GM12878 (cell line): ENCODE measurements at regions of chr11 and their contacts with region 1.

Region 1: GRCh38 chr11:75280227-75280701 is 39.7 kb downstream of the TPBGL start:
- DNase-seq: peak; percentile 16
- ATAC-seq: peak; percentile 98
- H3K4me3 ChIP-seq: no peak overlapping the region
- H3K27ac ChIP-seq: no peak overlapping the region
- H3K4me1 ChIP-seq: no peaks in the 10 kb centered on the region
- H3K27me3 ChIP-seq: no peaks in the 10 kb centered on the region; a peak in 1 of 4 replicates
- CTCF ChIP-seq: peak; percentile 93 to 96 (median 93)
- EP300 ChIP-seq: no peak
- POLR2A ChIP-seq: no peak
- RAD21 ChIP-seq: peak; percentile 90

Region 2: DNA sequence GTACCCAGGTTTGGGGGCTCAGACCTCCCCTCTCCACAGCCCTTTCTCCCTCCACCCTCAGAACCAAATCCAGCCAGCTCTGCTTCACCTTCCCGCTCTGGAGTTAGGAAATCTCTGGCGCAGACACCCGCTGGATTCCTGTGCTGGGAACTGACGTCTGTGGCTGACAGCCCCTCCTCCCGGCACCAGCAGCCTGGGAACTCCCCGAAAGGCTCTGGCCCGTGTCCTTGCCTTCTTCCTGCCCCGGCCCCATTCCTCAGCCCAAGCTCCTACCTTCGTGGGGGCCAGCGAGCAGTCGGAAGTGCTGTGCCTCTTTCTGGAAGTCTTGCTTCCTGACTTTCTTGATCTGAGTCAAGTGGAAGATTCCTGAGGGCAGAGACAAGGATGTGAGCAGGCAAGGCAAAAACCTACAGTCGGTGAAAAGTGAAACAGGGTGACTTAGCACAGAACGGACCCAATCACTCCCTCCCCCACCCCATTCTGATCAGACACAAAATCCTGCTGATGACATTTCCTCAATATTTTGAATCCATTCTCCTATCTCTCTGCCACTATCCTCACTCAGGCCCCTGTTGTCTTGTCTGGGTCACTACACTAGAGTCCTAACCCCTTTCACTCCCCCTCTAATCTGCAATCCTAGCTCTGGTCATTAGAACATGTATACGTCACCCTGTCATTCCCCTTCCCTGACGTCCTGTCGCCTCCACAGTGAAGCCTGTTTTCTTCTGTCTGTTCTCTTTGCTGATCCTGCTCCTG is 583.2 kb before region 1 on chr11:
- CTCF ChIA-PET with region 1: no interaction called
- POLR2A ChIA-PET with region 1: no interaction called
- RAD21 ChIA-PET with region 1: no interaction called
- SMC1A ChIA-PET with region 1: no interaction called
- in situ Hi-C with region 1: no loop called
- intact Hi-C with region 1: no loop called
- DNase-seq: no peak
- ATAC-seq: peak; percentile 48
- H3K4me3 ChIP-seq: no peak overlapping the region
- H3K27ac ChIP-seq: no peak overlapping the region
- H3K4me1 ChIP-seq: no peaks in the 10 kb centered on the region; the same call in 1 of the 2 replicates
- H3K27me3 ChIP-seq: peaks cover 0 to 3% of the 10 kb centered on the region in 2 experiments; a peak in 1 of 4 replicates
- CTCF ChIP-seq: no peak
- EP300 ChIP-seq: no peak
- POLR2A ChIP-seq: no peak
- RAD21 ChIP-seq: no peak

Region 3: DNA sequence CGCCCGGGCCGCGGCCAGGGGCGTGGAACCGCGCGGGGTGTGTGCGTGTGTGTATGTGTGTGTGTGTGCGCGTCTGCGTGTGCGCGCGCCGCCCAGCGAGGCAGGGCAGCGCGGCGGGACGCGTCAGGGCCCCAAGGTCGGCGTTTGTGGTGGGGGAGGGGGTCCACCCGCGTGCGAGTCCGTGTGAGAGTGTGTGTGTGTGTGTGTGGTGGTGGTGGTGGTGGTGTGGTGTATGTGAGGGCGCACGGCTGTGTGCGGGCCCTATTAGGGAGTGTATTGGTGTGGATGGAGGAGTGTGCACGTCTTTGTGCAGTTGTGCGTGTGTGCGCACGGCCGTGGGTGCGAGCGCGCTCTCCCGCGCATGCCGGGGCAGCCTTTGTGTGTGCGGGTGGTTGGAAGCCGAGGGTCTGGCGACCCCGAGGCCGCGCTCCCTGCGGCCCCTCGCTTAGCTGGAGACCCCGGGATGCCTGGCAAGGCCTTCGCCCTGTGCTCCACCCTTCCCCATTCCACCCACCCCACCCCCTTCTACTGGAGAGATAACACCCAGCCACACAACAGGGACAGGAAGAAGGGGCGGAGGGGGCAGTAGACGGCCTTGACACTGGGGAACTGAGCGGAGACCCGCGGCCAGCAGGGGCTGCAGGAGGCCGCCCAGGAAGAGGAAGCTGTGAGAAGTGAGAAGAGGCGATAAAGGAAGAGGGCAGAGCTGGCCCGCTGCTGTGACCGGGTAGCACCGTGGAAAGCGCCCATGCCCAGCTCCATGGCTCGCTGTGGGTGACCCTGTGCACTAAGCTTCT is 71.7 kb after region 1 on chr11:
- CTCF ChIA-PET with region 1: interaction called, 23 read pairs
- POLR2A ChIA-PET with region 1: no interaction called
- RAD21 ChIA-PET with region 1: no interaction called
- SMC1A ChIA-PET with region 1: interaction called, 9 read pairs
- in situ Hi-C with region 1: no loop called
- intact Hi-C with region 1: no loop called
- DNase-seq: no peak
- ATAC-seq: peak; percentile 75
- H3K4me3 ChIP-seq: peak overlapping the region; percentile 73
- H3K27ac ChIP-seq: no peak overlapping the region
- H3K4me1 ChIP-seq: peaks cover 11% of the 10 kb centered on the region; the same call in 1 of the 2 replicates
- H3K27me3 ChIP-seq: peaks cover 0 to 4% of the 10 kb centered on the region in 2 experiments; a peak in 1 of 4 replicates
- CTCF ChIP-seq: 0 out of 6 replicates have a peak, but pooled peaks of 1 of the 3 experiments have one; percentile 5
- EP300 ChIP-seq: no peak
- POLR2A ChIP-seq: peak; percentile 51; the same call in 1 of the 2 replicates
- RAD21 ChIP-seq: no peak